Posterior vena cava (tissue), 2 donors: ENCODE measurements at regions of chr2 and their contacts with region 1.

Region 1: DNA sequence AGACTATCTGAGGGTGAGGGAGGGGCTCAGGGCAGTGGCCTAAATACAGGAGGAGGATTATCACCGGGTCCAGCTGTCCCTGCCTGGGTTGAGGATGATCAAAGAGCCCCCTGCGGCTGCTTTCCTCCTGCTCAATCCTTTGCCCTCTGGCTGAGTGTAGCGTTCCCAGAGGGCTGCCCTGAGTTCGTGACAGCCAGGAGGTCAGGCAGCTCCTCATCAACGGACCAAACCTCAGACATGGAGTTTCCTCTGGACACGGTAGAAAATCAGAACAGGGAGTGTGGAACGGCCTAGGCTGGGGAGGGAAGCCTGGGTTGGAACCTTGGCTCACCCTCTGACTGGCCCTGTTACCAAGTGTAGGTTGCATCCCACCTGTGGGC is 23.5 kb downstream of the CIB4 start:
- DNase-seq: peak; percentile 62

Region 2: GRCh38 chr2:26555246-26556133 is 62.1 kb before region 1 on chr2:
- intact Hi-C with region 1: no loop called
- DNase-seq: peak; percentile 54

Region 3: DNA sequence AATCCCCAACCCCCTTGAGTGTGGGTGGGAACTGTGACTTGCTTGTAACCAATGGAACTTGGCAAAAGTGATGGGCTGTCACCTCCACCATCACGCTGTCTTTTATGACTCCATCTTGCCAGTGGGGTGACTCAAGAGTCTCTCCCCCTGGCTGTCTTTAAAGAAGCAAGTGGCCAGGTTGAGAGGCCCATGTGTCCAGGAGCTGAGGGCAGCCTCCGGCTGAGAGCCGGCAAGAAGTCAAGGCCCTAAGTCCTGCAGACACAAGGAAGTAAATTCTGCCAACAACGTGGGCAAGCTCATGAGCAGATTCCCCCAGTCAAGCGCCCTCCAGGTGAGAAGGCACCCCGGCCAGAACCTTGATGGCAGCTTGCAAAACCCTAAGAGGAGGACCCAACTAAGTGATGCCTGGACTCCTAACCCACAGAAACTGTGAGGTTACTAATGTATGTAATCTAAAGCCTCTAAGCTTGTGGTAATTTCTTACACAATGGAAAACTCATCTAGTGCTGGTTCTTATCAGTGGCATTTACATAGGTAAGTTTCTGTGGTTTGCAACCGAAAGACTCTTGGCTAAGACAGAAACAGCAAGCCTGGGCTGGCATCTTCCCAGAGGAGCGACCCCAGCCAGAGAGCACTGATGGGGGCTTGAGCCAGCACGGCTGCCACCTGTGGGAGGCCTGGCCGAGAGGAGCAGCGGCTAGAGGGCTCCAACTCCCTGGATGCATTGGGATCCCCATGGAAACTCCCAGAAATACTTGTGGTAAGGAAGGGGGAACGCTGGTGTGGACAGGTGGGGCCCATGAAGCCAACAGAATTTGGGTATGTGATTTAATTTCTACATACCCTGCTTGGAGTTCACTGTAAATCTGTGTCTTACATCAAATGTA is 25.8 kb before region 1 on chr2:
- intact Hi-C with region 1: loop called in 1 of 2 experiments (anchors 1 kb)
- DNase-seq: peak; percentile 78